ENCODE measurements at regions of chr19 and their contacts with region 1.

Region 1: DNA sequence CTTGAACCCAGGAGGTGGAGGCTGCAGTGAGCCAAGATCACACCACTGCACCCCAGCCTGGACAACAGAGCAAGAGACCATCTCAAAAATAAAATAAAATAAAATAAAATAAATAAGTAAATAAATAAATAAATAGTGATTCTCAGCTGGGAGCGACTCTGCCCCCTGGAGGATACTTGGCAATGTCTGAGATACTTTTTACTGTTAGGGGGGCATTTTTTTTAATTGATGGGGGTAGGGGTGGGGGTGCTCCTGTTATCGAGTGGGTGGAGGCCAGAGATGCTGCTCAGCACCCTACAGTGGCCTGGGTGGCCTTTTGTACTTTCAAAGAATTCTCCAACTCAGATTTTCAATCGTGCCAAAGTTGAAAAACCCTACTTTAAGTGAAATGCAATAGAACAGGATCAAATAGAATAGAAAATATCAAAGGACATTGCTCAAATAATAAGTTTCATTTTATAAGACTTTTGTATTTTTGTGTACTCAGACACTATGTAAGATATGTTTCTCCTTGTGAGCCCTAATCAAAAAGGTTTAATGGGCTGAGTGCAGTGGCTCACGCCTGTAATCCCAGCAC is 7.1 kb upstream of the CLPP start:
- DNase-seq: no peak
- H3K4me3 ChIP-seq: no peak overlapping the region
- H3K27ac ChIP-seq: no peak overlapping the region
- H3K4me1 ChIP-seq: no peaks in the 10 kb centered on the region
- H3K27me3 ChIP-seq: no peaks in the 10 kb centered on the region
- CTCF ChIP-seq: peak; percentile 56

Region 2: DNA sequence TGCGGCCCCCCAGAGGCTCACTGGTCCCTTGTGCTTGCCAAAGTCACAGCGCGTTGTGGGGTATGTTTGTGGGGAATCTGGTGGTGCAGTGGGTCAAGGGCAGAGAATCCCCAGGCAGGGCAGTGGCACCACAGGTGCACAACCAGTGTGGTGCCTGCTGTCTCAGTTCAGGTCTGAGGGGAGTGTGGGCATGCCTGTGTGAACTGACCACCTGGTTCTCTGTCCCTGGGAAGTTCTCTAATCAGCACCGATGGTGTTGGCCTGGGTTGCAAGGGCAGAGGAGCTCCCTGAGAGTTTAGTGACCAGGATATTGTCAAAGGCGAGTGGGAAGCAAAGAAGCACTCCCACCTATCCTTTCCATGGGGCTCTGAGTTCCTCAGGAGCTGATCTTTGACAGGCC is 181.0 kb before region 1 on chr19:
- CTCF ChIA-PET with region 1: no interaction called
- POLR2A ChIA-PET with region 1: no interaction called
- intact Hi-C with region 1: no loop called
- DNase-seq: no peak
- H3K4me3 ChIP-seq: no peak overlapping the region
- H3K27ac ChIP-seq: no peak overlapping the region
- H3K4me1 ChIP-seq: no peaks in the 10 kb centered on the region
- H3K27me3 ChIP-seq: peaks cover 3% of the 10 kb centered on the region
- CTCF ChIP-seq: no peak

Region 3: DNA sequence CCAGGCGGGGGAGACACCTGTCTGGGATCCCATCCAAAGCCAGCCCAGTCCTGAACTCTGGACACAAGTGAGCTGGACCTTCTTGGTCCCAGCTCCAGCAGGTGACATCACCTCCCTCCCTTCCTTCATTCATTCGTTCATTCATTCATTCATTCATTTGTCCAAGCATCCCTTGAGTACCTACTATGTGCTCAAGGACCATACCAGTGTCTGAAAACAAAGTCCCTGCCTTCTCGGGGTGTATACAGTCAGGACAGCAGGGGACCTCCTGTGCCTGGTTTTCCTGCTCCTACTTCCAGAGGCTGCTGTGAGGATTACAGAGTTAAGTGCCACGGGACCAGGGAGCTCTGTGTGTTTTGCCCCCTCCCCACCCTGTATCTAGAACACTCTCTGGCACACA is 34.8 kb before region 1 on chr19:
- CTCF ChIA-PET with region 1: interaction called, 16 read pairs
- POLR2A ChIA-PET with region 1: no interaction called
- intact Hi-C with region 1: no loop called
- DNase-seq: no peak
- H3K4me3 ChIP-seq: no peak overlapping the region
- H3K27ac ChIP-seq: no peak overlapping the region
- H3K4me1 ChIP-seq: no peaks in the 10 kb centered on the region
- H3K27me3 ChIP-seq: no peaks in the 10 kb centered on the region
- CTCF ChIP-seq: no peak

Region 4: GRCh38 chr19:6333440-6333839 is 20.7 kb before region 1 on chr19 and contains the start of gene ACER1:
- CTCF ChIA-PET with region 1: no interaction called
- POLR2A ChIA-PET with region 1: no interaction called
- intact Hi-C with region 1: no loop called
- DNase-seq: no peak
- H3K4me3 ChIP-seq: no peak within 1 kb of the TSS
- H3K27ac ChIP-seq: no peak within 1 kb of the TSS
- H3K4me1 ChIP-seq: no peaks in the 10 kb centered on the region
- H3K27me3 ChIP-seq: no peaks in the 10 kb centered on the region
- CTCF ChIP-seq: no peak
- total RNA-seq, gene ACER1: not detected in 2 replicates

Region 5: GRCh38 chr19:6450166-6450565 is 96.0 kb after region 1 on chr19:
- CTCF ChIA-PET with region 1: no interaction called
- POLR2A ChIA-PET with region 1: no interaction called
- intact Hi-C with region 1: no loop called
- DNase-seq: no peak
- H3K4me3 ChIP-seq: no peak overlapping the region
- H3K27ac ChIP-seq: no peak overlapping the region
- H3K4me1 ChIP-seq: no peaks in the 10 kb centered on the region
- H3K27me3 ChIP-seq: no peaks in the 10 kb centered on the region
- CTCF ChIP-seq: no peak